Head of caudate nucleus (tissue), 42 donors: ENCODE measurements at regions of chr7 and their contacts with region 1.

Region 1: GRCh38 chr7:141737834-141738591 is at the start of gene SSBP1:
- DNase-seq: peak; percentile 82 to 97 (median 92)

Region 2: DNA sequence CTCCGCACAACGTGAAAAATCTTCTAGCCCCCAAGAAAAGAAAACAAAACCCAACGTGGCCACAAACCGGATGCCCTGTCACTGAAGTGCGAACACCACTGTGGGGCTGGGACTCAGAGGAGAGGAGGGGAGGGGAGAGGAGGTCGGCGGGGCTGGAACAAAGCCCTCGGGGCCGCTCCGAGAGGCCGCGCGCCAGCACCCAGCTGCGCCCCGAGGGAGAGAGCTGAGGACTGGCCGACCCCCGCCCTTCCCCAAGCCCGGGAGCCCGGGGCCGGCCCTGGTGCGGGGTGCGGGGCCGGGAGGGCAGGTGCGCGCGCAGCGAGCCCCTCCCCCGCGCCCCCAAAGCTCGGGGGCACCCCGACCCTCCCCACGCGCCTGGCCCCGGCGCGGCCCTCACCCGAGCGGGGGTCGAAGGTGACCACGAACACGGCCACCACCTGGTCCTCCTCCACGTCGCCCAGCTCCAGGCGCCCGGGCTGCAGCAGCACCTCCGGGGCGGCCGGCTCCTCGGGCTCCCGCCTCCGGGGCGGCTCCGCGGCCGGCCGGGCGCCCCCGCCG is 36.4 kb before region 1 on chr7:
- intact Hi-C with region 1: loop called (anchors 5 kb)
- DNase-seq: peak in 38 of 42 donors; percentile 29 to 84 (median 54)